ENCODE measurements at regions of chr15 and their contacts with region 1.

Region 1: GRCh38 chr15:85296615-85297402 is 83.6 kb upstream of the AKAP13 start:
- DNase-seq: peak; percentile 87
- ATAC-seq: peak; percentile 99
- H3K4me3 ChIP-seq: peak overlapping the region in 3 of 5 experiments; percentile 34 to 50 (median 40)
- H3K4me3 Mint-ChIP-seq: peak overlapping the region; percentile 85
- H3K27ac ChIP-seq: no peak overlapping the region
- H3K27ac Mint-ChIP-seq: peak overlapping the region; percentile 81
- H3K4me1 ChIP-seq: peaks cover 8 to 17% of the 10 kb centered on the region in 2 donors
- H3K4me1 Mint-ChIP-seq: peaks cover 20% of the 10 kb centered on the region
- H3K27me3 ChIP-seq: no peaks in the 10 kb centered on the region
- H3K27me3 Mint-ChIP-seq: no peaks in the 10 kb centered on the region
- CTCF ChIP-seq: peak; percentile 84

Region 2: GRCh38 chr15:85318048-85318731 is 21.4 kb after region 1 on chr15:
- CTCF ChIA-PET with region 1: interaction called, 132 read pairs
- POLR2A ChIA-PET with region 1: interaction called, 5 read pairs
- intact Hi-C with region 1: no loop called
- DNase-seq: peak; percentile 42
- ATAC-seq: peak; percentile 90
- H3K4me3 ChIP-seq: no peak overlapping the region
- H3K4me3 Mint-ChIP-seq: peak overlapping the region; percentile 46
- H3K27ac ChIP-seq: peak overlapping the region; percentile 20 to 29
- H3K27ac Mint-ChIP-seq: peak overlapping the region; percentile 83
- H3K4me1 ChIP-seq: peaks cover 39 to 40% of the 10 kb centered on the region in 2 donors
- H3K4me1 Mint-ChIP-seq: peaks cover 63% of the 10 kb centered on the region
- H3K27me3 ChIP-seq: no peaks in the 10 kb centered on the region
- H3K27me3 Mint-ChIP-seq: no peaks in the 10 kb centered on the region
- CTCF ChIP-seq: peak; percentile 29

Region 3: GRCh38 chr15:85388566-85389305 is 91.9 kb after region 1 on chr15:
- CTCF ChIA-PET with region 1: interaction called, 12 read pairs
- POLR2A ChIA-PET with region 1: no interaction called
- intact Hi-C with region 1: no loop called
- DNase-seq: no peak
- ATAC-seq: no peak
- H3K4me3 ChIP-seq: peak overlapping the region in 1 of 5 experiments; percentile 13
- H3K4me3 Mint-ChIP-seq: peak overlapping the region; percentile 73
- H3K27ac ChIP-seq: no peak overlapping the region
- H3K27ac Mint-ChIP-seq: no peak overlapping the region
- H3K4me1 ChIP-seq: peaks cover 57 to 66% of the 10 kb centered on the region in 2 donors
- H3K4me1 Mint-ChIP-seq: peaks cover 33% of the 10 kb centered on the region
- H3K27me3 ChIP-seq: no peaks in the 10 kb centered on the region
- H3K27me3 Mint-ChIP-seq: no peaks in the 10 kb centered on the region
- CTCF ChIP-seq: no peak

Region 4: DNA sequence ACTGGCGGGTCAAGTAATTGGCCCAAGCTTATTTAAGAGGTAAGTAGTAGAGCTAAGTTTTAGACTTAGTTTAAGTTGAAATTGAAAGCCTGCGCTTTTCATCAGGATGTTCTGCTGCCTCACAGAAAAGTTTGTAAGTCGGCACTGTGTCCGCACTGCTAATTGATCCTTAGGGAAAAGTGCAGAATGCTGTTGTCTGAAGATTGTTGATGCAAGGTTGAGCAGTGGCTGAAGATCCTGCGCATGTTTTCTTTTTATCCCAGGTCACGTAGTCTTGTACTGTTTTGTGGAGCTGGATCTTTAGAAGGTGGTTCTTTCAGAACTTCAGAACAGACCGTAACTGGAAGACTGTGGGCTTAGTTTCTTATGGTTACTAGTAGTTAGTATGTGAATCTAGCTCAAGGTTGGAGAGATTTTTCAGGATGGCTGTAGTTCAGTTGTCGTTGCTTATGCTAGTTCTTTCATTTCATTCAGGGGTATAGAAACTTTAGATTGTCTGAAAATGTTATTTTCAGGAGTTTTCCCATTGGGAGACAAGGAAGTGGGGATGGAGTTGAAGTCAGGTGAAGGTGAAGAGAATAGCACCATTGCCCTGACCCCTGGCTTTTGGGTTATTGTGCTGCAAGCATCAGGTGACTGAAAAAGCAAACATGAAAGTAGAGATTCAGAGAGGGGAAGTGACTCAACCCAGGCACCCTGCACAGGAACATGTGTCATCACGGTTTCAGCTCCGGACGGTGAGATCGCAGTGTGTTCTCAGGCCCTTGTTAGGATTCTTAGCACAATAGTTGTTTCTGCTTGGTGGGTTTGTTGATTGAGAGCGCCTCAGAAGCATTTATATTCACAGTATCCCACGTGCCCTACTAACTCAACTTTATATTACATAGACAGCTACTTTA is 116.4 kb after region 1 on chr15:
- CTCF ChIA-PET with region 1: interaction called, 401 read pairs
- POLR2A ChIA-PET with region 1: interaction called, 5 read pairs
- intact Hi-C with region 1: loop called (anchors 1 kb)
- DNase-seq: peak; percentile 86
- ATAC-seq: peak; percentile 93
- H3K4me3 ChIP-seq: peak overlapping the region in 1 of 5 experiments; percentile 9
- H3K4me3 Mint-ChIP-seq: peak overlapping the region; percentile 56
- H3K27ac ChIP-seq: peak overlapping the region; percentile 13 to 72
- H3K27ac Mint-ChIP-seq: peak overlapping the region; percentile 90
- H3K4me1 ChIP-seq: peaks cover 56 to 61% of the 10 kb centered on the region in 2 donors
- H3K4me1 Mint-ChIP-seq: peaks cover 67% of the 10 kb centered on the region
- H3K27me3 ChIP-seq: no peaks in the 10 kb centered on the region
- H3K27me3 Mint-ChIP-seq: no peaks in the 10 kb centered on the region
- CTCF ChIP-seq: peak; percentile 18

Region 5: GRCh38 chr15:85430406-85431204 is 133.8 kb after region 1 on chr15:
- CTCF ChIA-PET with region 1: interaction called, 10 read pairs
- POLR2A ChIA-PET with region 1: no interaction called
- intact Hi-C with region 1: no loop called
- DNase-seq: no peak
- ATAC-seq: no peak
- H3K4me3 ChIP-seq: no peak overlapping the region
- H3K4me3 Mint-ChIP-seq: no peak overlapping the region
- H3K27ac ChIP-seq: no peak overlapping the region
- H3K27ac Mint-ChIP-seq: no peak overlapping the region
- H3K4me1 ChIP-seq: peaks cover 15 to 35% of the 10 kb centered on the region in 2 donors
- H3K4me1 Mint-ChIP-seq: peaks cover 57% of the 10 kb centered on the region
- H3K27me3 ChIP-seq: no peaks in the 10 kb centered on the region
- H3K27me3 Mint-ChIP-seq: no peaks in the 10 kb centered on the region
- CTCF ChIP-seq: no peak

Region 6: GRCh38 chr15:85504749-85505676 is 208.2 kb after region 1 on chr15:
- CTCF ChIA-PET with region 1: interaction called, 56 read pairs
- POLR2A ChIA-PET with region 1: no interaction called
- intact Hi-C with region 1: loop called (anchors 1 kb)
- DNase-seq: peak; percentile 71
- ATAC-seq: no peak
- H3K4me3 ChIP-seq: no peak overlapping the region
- H3K4me3 Mint-ChIP-seq: no peak overlapping the region
- H3K27ac ChIP-seq: peak overlapping the region in 1 of 2 donors; percentile 35
- H3K27ac Mint-ChIP-seq: no peak overlapping the region
- H3K4me1 ChIP-seq: peaks cover 13 to 16% of the 10 kb centered on the region in 2 donors
- H3K4me1 Mint-ChIP-seq: peaks cover 48% of the 10 kb centered on the region
- H3K27me3 ChIP-seq: no peaks in the 10 kb centered on the region
- H3K27me3 Mint-ChIP-seq: no peaks in the 10 kb centered on the region
- CTCF ChIP-seq: peak; percentile 74